ENCODE measurements at regions of chr14 and their contacts with region 1.

Region 1: GRCh38 chr14:61252369-61253063 is 28.6 kb downstream of the TMEM30B start:
- DNase-seq: peak; percentile 67
- H3K4me3 ChIP-seq: no peak overlapping the region; a peak in 1 of 4 replicates
- H3K27ac ChIP-seq: peak overlapping the region; percentile 68 to 83
- H3K4me1 ChIP-seq: peaks cover 3 to 19% of the 10 kb centered on the region in 2 experiments
- H3K27me3 ChIP-seq: no peaks in the 10 kb centered on the region
- CTCF ChIP-seq: peak; percentile 96
- EP300 ChIP-seq: peak in 1 of 2 experiments; percentile 32; a peak in 1 of 4 replicates
- RAD21 ChIP-seq: peak; percentile 99

Region 2: DNA sequence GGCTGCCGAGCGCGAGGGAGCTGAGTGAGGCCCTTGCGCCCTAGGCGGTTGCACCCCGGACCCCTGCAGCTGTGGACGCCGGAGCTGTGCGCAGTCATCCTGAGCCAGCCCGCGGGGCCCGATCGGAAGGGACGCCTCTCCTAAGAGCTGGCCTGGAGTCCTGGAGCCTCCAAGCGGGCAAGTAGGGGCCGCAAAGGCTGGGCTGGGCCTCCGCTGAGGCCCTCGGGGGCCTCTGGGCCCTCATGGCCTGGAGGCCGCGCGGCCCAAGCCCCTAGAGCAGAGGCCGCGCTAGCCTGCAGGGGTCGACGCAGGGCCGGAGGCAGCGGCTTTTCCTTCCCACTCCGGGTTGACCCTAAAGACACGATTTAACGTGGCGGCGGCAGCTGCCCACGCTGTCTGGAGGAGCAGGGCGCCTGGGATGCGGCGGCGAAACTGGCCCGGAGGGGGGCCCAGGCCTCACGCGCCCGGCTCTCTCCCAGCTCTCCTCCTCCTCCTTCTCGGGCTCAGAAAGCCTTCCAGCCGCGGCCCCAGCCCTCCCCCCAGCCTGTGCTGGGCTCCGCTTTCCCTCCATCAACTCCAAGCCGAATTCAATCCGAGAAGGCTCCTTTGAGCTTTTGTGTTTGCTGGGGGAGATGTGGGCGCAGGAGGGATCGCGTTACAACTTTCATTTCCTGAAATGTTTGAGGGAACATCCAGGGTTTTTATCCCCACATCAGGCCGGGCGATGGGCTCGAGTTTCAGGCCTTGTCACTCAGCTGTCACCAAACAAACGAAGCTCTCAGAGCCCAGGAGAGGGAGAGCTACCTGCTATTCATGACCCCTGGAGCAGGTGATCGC is 614.8 kb before region 1 on chr14:
- CTCF ChIA-PET with region 1: interaction called, 21 read pairs
- POLR2A ChIA-PET with region 1: no interaction called
- DNase-seq: peak; percentile 67
- H3K4me3 ChIP-seq: peak overlapping the region; percentile 34 to 46; a peak in 3 of 4 replicates
- H3K27ac ChIP-seq: peak overlapping the region in 1 of 2 experiments; percentile 87; a peak in 2 of 4 replicates
- H3K4me1 ChIP-seq: peaks cover 18 to 24% of the 10 kb centered on the region in 2 experiments; a peak in 3 of 4 replicates
- H3K27me3 ChIP-seq: no peaks in the 10 kb centered on the region
- CTCF ChIP-seq: no peak
- EP300 ChIP-seq: peak in 1 of 2 experiments; percentile 34; a peak in 1 of 4 replicates
- RAD21 ChIP-seq: no peak

Region 3: DNA sequence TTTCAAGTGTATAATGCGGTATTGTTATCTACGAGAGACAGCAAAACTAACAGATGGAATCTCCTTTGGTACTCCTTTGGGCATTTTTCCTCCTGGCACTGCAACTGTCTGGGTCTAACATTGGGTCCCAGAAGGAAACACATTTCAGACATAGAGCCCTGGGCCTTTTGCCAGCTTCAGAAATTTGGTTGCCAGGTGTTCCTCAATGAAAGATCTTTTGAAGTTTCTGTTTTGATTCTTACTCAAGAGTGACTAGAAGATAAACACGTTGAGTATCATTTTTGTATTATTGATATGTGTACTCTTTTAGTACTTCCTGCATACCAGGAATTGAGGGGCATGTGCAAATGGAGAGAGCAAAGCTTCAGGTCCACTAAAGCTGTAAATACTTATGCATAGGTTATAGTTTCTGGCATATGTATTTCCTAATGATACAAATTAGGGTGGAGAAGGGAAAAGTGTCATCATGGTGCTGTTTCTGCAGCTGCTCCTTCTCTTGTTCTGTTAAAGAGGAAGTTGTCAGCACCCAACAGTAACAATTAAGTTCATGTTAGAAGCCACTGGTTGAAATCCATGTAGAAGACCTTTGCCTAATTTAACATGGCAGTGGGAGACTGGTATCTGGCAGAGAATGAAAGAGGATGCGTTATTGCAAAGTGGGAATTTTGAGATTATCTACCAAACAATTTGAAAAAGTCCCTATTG is 217.9 kb before region 1 on chr14:
- CTCF ChIA-PET with region 1: interaction called, 11 read pairs
- POLR2A ChIA-PET with region 1: no interaction called
- DNase-seq: no peak
- H3K4me3 ChIP-seq: no peak overlapping the region
- H3K27ac ChIP-seq: peak overlapping the region; percentile 65 to 72; a peak in 2 of 4 replicates
- H3K4me1 ChIP-seq: peaks cover 17 to 29% of the 10 kb centered on the region in 2 experiments; a peak in 3 of 4 replicates
- H3K27me3 ChIP-seq: no peaks in the 10 kb centered on the region
- CTCF ChIP-seq: no peak
- EP300 ChIP-seq: no peak
- RAD21 ChIP-seq: no peak

Region 4: GRCh38 chr14:61130512-61131260 is 121.8 kb before region 1 on chr14:
- CTCF ChIA-PET with region 1: no interaction called
- POLR2A ChIA-PET with region 1: no interaction called
- DNase-seq: no peak
- H3K4me3 ChIP-seq: no peak overlapping the region
- H3K27ac ChIP-seq: no peak overlapping the region
- H3K4me1 ChIP-seq: peaks cover 0 to 11% of the 10 kb centered on the region in 2 experiments; a peak in 1 of 4 replicates
- H3K27me3 ChIP-seq: no peaks in the 10 kb centered on the region
- CTCF ChIP-seq: no peak
- EP300 ChIP-seq: no peak
- RAD21 ChIP-seq: no peak